AG04450 (cell line): ENCODE measurements at regions of chr4 and their contacts with region 1.

Region 1: GRCh38 chr4:171612907-171613306 is 200.3 kb upstream of the GALNTL6 start:
- DNase-seq: no peak
- H3K4me3 ChIP-seq: no peak overlapping the region
- H3K27ac ChIP-seq: no peak overlapping the region
- H3K27me3 ChIP-seq: no peaks in the 10 kb centered on the region
- CTCF ChIP-seq: no peak

Region 2: DNA sequence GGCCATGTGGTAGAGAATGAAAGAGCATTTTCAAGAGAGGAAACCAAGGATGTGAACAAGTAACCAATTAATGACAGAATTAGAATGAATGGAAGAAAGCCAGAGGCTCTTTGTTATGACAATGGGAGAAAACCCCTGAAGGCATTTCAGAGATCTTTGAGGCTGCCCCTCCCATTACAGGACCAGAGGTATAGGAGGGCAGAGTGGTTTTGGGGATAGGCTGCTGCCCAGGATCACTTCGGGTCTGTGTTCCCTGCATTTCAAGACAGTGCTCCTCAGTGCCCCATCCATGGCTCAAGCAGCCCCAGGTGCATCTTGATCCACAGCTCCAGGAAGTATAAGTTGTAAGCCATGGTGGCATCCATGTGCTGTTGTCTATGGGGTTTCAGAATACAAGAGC is 1731.1 kb before region 1 on chr4:
- CTCF ChIA-PET with region 1: interaction called, 10 read pairs
- POLR2A ChIA-PET with region 1: no interaction called
- DNase-seq: no peak
- H3K4me3 ChIP-seq: no peak overlapping the region
- H3K27ac ChIP-seq: no peak overlapping the region
- H3K27me3 ChIP-seq: no peaks in the 10 kb centered on the region
- CTCF ChIP-seq: no peak

Region 3: GRCh38 chr4:171397175-171397574 is 215.7 kb before region 1 on chr4:
- CTCF ChIA-PET with region 1: no interaction called
- POLR2A ChIA-PET with region 1: no interaction called
- DNase-seq: no peak
- H3K4me3 ChIP-seq: no peak overlapping the region
- H3K27ac ChIP-seq: no peak overlapping the region
- H3K27me3 ChIP-seq: no peaks in the 10 kb centered on the region
- CTCF ChIP-seq: no peak

Region 4: GRCh38 chr4:171629182-171629581 is 16.3 kb after region 1 on chr4:
- CTCF ChIA-PET with region 1: no interaction called
- POLR2A ChIA-PET with region 1: no interaction called
- DNase-seq: no peak
- H3K4me3 ChIP-seq: no peak overlapping the region
- H3K27ac ChIP-seq: no peak overlapping the region
- H3K27me3 ChIP-seq: no peaks in the 10 kb centered on the region
- CTCF ChIP-seq: no peak